Astrocyte of the cerebellum (primary cell): ENCODE measurements at regions of chr14 and their contacts with region 1.

Region 1: DNA sequence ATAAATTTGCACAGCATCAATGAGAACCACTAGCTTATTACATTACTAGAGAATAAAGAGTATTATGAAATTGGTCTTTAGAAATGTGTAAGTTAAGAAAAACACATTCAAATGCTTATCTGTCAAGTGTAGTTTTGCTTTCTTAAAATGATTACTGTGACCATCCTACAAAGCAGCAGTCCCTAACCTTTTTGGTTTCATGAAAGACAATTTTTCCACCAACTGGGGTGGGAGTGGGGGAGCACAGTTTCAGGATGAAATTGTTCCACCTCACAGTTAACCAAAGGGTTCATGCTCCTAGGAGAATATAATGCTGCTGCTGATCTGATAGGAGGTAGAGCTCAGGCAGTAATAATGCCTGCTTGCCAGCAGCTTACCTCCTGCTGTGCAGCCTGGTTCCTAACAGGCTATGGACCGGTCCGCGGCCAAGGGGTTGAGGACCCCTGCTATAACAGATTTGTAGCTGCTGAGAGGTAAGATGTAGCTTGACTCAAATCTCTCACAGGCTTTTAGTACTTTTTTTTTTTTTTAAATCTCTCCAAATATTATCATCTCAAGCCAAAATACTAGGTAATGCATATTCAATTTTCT is 45.4 kb downstream of the PPP4R3A start:
- DNase-seq: no peak
- H3K4me3 ChIP-seq: no peak overlapping the region
- CTCF ChIP-seq: no peak

Region 2: DNA sequence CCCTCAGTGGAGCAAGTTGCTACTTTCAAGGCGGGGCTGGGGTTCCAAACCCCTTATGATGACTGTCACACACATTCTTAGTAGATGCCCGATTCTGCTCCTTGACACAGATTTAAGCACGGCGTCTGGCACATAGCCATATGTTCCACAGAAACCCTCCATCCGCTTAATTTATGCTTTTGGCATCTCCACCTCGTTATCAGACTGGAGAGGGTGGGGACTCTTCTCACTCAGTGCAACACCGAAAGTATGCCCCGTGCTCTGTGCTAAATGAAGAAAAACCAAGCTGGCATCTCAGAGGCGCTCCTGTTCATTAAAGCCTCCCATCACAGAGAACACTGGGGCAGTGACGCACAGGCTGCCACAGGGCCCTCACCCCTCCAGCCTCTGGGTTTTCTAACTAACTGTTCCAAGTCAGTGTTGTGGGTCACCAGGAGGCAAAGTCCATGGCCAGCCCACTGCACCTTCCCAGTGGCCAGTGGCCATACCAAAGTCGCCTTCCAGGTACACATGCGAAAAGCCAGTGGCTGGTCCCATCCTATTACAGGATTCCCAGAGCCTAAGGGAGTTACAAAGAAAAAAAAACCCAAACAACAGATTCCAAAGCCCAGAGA is 74.4 kb before region 1 on chr14:
- in situ Hi-C with region 1: loop called (anchors 5 kb)
- DNase-seq: no peak
- H3K4me3 ChIP-seq: no peak overlapping the region
- CTCF ChIP-seq: no peak

Region 3: GRCh38 chr14:91649930-91650329 is 185.2 kb after region 1 on chr14:
- in situ Hi-C with region 1: no loop called
- DNase-seq: peak; percentile 26
- H3K4me3 ChIP-seq: no peak overlapping the region
- CTCF ChIP-seq: peak; percentile 48